ENCODE measurements at regions of chr3 and their contacts with region 1.

Region 1: GRCh38 chr3:66276705-66277274 is 56.0 kb downstream of the SLC25A26 start:
- DNase-seq: no peak
- ATAC-seq: peak; percentile 34
- H3K4me3 Mint-ChIP-seq: no peak overlapping the region
- H3K27ac Mint-ChIP-seq: no peak overlapping the region
- H3K4me1 Mint-ChIP-seq: no peaks in the 10 kb centered on the region
- H3K27me3 Mint-ChIP-seq: no peaks in the 10 kb centered on the region
- CTCF ChIP-seq: peak; percentile 76

Region 2: GRCh38 chr3:66253790-66254620 is 22.8 kb before region 1 on chr3:
- CTCF ChIA-PET with region 1: interaction called, 6 read pairs
- POLR2A ChIA-PET with region 1: no interaction called
- intact Hi-C with region 1: loop called (anchors 1 kb)
- DNase-seq: no peak
- ATAC-seq: no peak
- H3K4me3 Mint-ChIP-seq: no peak overlapping the region
- H3K27ac Mint-ChIP-seq: no peak overlapping the region
- H3K4me1 Mint-ChIP-seq: peaks cover 18% of the 10 kb centered on the region
- H3K27me3 Mint-ChIP-seq: no peaks in the 10 kb centered on the region
- CTCF ChIP-seq: peak; percentile 96

Region 3: GRCh38 chr3:66372681-66373350 is 96.0 kb after region 1 on chr3:
- CTCF ChIA-PET with region 1: no interaction called
- POLR2A ChIA-PET with region 1: no interaction called
- intact Hi-C with region 1: loop called (anchors 1 kb)
- DNase-seq: no peak
- ATAC-seq: no peak
- H3K4me3 Mint-ChIP-seq: no peak overlapping the region
- H3K27ac Mint-ChIP-seq: no peak overlapping the region
- H3K4me1 Mint-ChIP-seq: no peaks in the 10 kb centered on the region
- H3K27me3 Mint-ChIP-seq: no peaks in the 10 kb centered on the region
- CTCF ChIP-seq: no peak

Region 4: DNA sequence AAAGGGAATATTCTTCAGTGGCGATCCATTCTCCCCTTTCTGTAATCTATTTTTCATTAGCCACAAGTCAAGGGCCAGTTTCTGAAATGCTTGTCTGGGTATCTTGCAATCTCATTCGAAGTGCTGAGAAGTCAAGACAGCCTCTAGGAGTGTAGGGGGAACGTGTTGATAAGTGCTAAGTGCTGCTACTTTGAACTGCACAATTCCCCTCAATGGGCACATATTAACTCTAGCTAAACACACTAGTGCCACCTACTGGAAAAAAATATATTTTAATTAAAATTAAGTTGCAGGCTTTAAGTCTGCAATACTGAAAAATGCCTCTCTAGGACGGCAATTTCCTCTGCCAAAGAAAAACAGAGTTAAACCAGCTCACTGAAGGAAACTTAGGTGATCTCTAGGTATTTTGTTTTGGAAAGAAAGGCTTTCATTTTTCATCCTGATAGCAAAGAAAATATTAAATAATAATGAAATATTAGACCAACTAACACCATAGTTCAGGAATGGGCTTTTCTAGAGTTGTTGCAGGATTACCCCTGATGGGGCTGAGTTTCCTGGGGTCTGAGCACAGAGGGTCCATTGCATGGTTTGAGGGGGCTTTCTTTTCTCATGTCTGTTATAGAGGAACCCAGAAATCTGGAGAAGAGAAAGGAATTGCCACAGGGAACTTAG is 539.4 kb after region 1 on chr3:
- CTCF ChIA-PET with region 1: interaction called, 68 read pairs
- POLR2A ChIA-PET with region 1: no interaction called
- intact Hi-C with region 1: loop called (anchors 1 kb)
- DNase-seq: no peak
- ATAC-seq: peak; percentile 56
- H3K4me3 Mint-ChIP-seq: no peak overlapping the region
- H3K27ac Mint-ChIP-seq: no peak overlapping the region
- H3K4me1 Mint-ChIP-seq: no peaks in the 10 kb centered on the region
- H3K27me3 Mint-ChIP-seq: peaks cover 5% of the 10 kb centered on the region
- CTCF ChIP-seq: peak; percentile 78

Region 5: DNA sequence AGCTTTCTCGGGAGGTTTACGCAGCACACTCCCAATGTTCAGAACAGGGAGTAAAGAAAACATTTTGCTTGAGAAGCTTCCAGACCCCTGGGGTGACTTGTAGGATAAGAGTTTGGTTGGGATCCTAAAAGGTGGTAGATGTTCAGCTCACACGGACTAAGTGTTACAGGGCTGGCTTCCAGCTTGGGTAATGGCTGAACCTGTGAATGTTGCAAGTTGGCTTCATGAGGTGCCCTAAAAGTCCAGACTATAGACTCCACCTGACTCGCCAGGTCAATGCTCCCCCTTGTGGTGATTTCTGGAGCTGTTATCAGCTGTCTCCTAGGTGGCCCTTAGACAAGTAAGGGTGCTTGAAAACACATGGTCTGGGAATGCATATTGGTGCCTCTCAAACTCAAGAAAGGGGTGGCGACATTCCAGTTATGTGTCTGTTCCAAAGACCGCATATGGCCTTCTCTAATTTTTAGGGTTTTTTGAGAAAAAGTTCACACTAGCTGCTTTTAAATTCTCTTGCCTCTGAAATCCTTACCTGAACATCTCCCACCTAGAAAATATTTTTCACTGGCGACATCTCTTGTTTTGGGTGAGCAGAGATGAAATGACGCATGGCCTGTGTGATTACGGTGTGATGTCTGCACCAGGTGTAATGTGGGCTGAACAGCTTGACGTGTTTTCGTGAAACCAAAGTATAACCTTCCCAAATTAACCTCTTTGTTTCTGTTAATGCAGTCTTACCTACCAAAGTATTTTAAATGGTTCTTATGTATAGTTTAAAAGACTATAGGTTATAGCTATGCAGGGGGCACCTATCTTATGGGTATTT is 545.6 kb after region 1 on chr3:
- CTCF ChIA-PET with region 1: interaction called, 68 read pairs
- POLR2A ChIA-PET with region 1: no interaction called
- intact Hi-C with region 1: loop called (anchors 1 kb)
- DNase-seq: peak; percentile 32
- ATAC-seq: peak; percentile 77
- H3K4me3 Mint-ChIP-seq: no peak overlapping the region
- H3K27ac Mint-ChIP-seq: no peak overlapping the region
- H3K4me1 Mint-ChIP-seq: no peaks in the 10 kb centered on the region
- H3K27me3 Mint-ChIP-seq: peaks cover 3% of the 10 kb centered on the region
- CTCF ChIP-seq: no peak

Measured in activated B cell treated with CpG ODN at 0.5 μM for 24 hours (primary cell).